ENCODE measurements at regions of chr17 and their contacts with region 1.

Region 1: GRCh38 chr17:39164675-39165143 is 1.3 kb downstream of the ARL5C start:
- DNase-seq: peak; percentile 86
- ATAC-seq: peak; percentile 89
- H3K4me3 ChIP-seq: peak overlapping the region; percentile 36 to 74 (median 69)
- H3K4me3 Mint-ChIP-seq: peak overlapping the region; percentile 90
- H3K27ac ChIP-seq: no peak overlapping the region
- H3K27ac Mint-ChIP-seq: peak overlapping the region; percentile 29
- H3K4me1 ChIP-seq: peaks cover 27 to 29% of the 10 kb centered on the region in 2 donors
- H3K4me1 Mint-ChIP-seq: peaks cover 28% of the 10 kb centered on the region
- H3K27me3 ChIP-seq: peaks cover 0 to 38% (median 10%) of the 10 kb centered on the region in 4 experiments
- H3K27me3 Mint-ChIP-seq: peaks cover 14% of the 10 kb centered on the region
- CTCF ChIP-seq: peak; percentile 85

Region 2: GRCh38 chr17:39174907-39175694 is 10.4 kb after region 1 on chr17:
- CTCF ChIA-PET with region 1: interaction called, 58 read pairs
- POLR2A ChIA-PET with region 1: interaction called, 3 read pairs
- intact Hi-C with region 1: no loop called
- DNase-seq: peak; percentile 83
- ATAC-seq: peak; percentile 76
- H3K4me3 ChIP-seq: peak overlapping the region in 2 of 5 experiments; percentile 9 to 35
- H3K4me3 Mint-ChIP-seq: peak overlapping the region; percentile 53
- H3K27ac ChIP-seq: no peak overlapping the region
- H3K27ac Mint-ChIP-seq: no peak overlapping the region
- H3K4me1 ChIP-seq: peaks cover 0 to 7% of the 10 kb centered on the region in 2 donors
- H3K4me1 Mint-ChIP-seq: peaks cover 5% of the 10 kb centered on the region
- H3K27me3 ChIP-seq: peaks cover 0 to 30% (median 10%) of the 10 kb centered on the region in 4 experiments
- H3K27me3 Mint-ChIP-seq: peaks cover 23% of the 10 kb centered on the region
- CTCF ChIP-seq: peak; percentile 82

Region 3: DNA sequence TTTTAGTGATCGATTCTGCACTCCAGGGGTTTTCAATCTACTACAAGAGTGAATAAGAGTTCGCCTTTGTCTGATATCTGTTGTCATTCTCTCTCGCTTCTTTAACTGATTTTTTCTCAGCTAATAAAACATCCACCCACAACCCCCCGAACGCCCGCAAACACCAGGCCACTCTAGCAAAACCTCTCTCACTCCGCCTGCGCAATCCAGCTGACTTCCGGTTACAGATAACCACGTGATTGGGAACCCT is 35.0 kb after region 1 on chr17:
- CTCF ChIA-PET with region 1: interaction called, 12 read pairs
- POLR2A ChIA-PET with region 1: interaction called, 5 read pairs
- intact Hi-C with region 1: no loop called
- DNase-seq: no peak
- ATAC-seq: peak; percentile 62
- H3K4me3 ChIP-seq: peak overlapping the region; percentile 78 to 100 (median 95)
- H3K4me3 Mint-ChIP-seq: peak overlapping the region; percentile 89
- H3K27ac ChIP-seq: peak overlapping the region; percentile 89 to 99
- H3K27ac Mint-ChIP-seq: peak overlapping the region; percentile 100
- H3K4me1 ChIP-seq: peaks cover 37 to 61% of the 10 kb centered on the region in 2 donors
- H3K4me1 Mint-ChIP-seq: peaks cover 57% of the 10 kb centered on the region
- H3K27me3 ChIP-seq: no peaks in the 10 kb centered on the region
- H3K27me3 Mint-ChIP-seq: no peaks in the 10 kb centered on the region
- CTCF ChIP-seq: no peak

Region 4: GRCh38 chr17:39235555-39236449 is 71.1 kb after region 1 on chr17:
- CTCF ChIA-PET with region 1: interaction called, 26 read pairs
- POLR2A ChIA-PET with region 1: no interaction called
- intact Hi-C with region 1: loop called (anchors 1 kb)
- DNase-seq: peak; percentile 63
- ATAC-seq: peak; percentile 22
- H3K4me3 ChIP-seq: no peak overlapping the region
- H3K4me3 Mint-ChIP-seq: no peak overlapping the region
- H3K27ac ChIP-seq: no peak overlapping the region
- H3K27ac Mint-ChIP-seq: peak overlapping the region; percentile 56
- H3K4me1 ChIP-seq: peaks cover 25 to 35% of the 10 kb centered on the region in 2 donors
- H3K4me1 Mint-ChIP-seq: peaks cover 31% of the 10 kb centered on the region
- H3K27me3 ChIP-seq: peaks cover 0 to 17% (median 16%) of the 10 kb centered on the region in 4 experiments
- H3K27me3 Mint-ChIP-seq: peaks cover 22% of the 10 kb centered on the region
- CTCF ChIP-seq: peak; percentile 57